ENCODE measurements at regions of chr3 and their contacts with region 1.

Region 1: DNA sequence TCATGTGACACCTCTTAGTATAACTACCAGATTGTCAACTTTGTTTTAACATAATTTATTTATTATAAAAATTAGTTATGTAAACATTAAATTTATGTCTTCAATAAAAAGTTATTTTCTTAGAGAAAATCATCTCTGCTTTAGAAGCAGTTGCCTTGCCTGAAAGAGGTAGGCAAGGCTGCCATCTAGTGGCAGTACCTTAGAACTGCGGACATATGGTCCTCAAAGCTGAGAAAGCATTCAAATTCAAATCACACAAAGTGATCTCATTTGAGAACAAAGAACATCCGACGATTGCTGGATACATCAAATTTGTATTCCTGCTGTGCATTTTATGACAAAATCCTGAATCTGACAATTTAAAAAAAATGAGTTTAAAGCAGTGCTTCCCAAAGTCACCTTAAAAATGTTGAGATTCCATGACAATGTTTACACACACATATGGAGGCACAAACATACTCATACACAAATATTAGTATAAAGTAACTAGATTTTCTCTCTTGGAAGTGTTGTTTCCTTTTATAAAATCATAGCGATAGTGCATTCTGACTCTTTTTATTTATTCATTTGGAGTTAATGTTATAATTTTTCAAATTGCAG is 617.4 kb downstream of the CADM2 start:
- DNase-seq: peak; percentile 31
- H3K4me3 ChIP-seq: no peak overlapping the region
- H3K27ac ChIP-seq: no peak overlapping the region
- H3K4me1 ChIP-seq: no peaks in the 10 kb centered on the region
- H3K27me3 ChIP-seq: no peaks in the 10 kb centered on the region
- CTCF ChIP-seq: peak; percentile 82 to 88

Region 2: GRCh38 chr3:84547971-84548970 is 1027.9 kb before region 1 on chr3:
- CTCF ChIA-PET with region 1: no interaction called
- dilution Hi-C with region 1: no loop called
- in situ Hi-C with region 1: no loop called
- intact Hi-C with region 1: loop called (anchors 1 kb)
- DNase-seq: peak; percentile 16
- H3K4me3 ChIP-seq: no peak overlapping the region
- H3K27ac ChIP-seq: no peak overlapping the region
- H3K4me1 ChIP-seq: no peaks in the 10 kb centered on the region
- H3K27me3 ChIP-seq: no peaks in the 10 kb centered on the region
- CTCF ChIP-seq: peak; percentile 44 to 58

Region 3: DNA sequence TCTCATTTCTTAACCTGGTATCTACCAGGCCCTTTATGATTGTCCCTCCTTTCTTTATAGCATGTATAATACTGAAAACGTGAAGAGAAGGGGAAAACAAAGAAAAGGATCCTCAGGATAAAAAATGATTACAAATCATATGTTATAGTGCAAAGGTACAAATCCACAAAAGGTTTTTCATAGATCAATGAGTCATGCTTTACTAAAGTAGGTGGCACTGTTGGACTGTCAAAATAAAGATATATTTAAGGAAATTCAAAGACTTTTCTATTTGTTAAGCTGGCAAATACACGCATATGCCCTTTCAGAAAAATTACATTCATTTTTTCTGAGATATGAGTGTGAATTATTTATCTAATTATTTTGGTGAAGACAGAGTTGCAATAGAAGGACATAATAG is 465.8 kb before region 1 on chr3:
- CTCF ChIA-PET with region 1: no interaction called
- dilution Hi-C with region 1: no loop called
- in situ Hi-C with region 1: no loop called
- intact Hi-C with region 1: loop called (anchors 1 kb)
- DNase-seq: no peak
- H3K4me3 ChIP-seq: no peak overlapping the region
- H3K27ac ChIP-seq: no peak overlapping the region
- H3K4me1 ChIP-seq: no peaks in the 10 kb centered on the region
- H3K27me3 ChIP-seq: no peaks in the 10 kb centered on the region
- CTCF ChIP-seq: peak in 1 of 2 donors; percentile 23

Region 4: GRCh38 chr3:85304359-85304964 is 271.7 kb before region 1 on chr3:
- CTCF ChIA-PET with region 1: no interaction called
- dilution Hi-C with region 1: no loop called
- in situ Hi-C with region 1: no loop called
- intact Hi-C with region 1: loop called (anchors 5 kb)
- DNase-seq: peak; percentile 1
- H3K4me3 ChIP-seq: no peak overlapping the region
- H3K27ac ChIP-seq: no peak overlapping the region
- H3K4me1 ChIP-seq: no peaks in the 10 kb centered on the region
- H3K27me3 ChIP-seq: peaks cover 3% of the 10 kb centered on the region
- CTCF ChIP-seq: peak; percentile 34 to 45

Region 5: DNA sequence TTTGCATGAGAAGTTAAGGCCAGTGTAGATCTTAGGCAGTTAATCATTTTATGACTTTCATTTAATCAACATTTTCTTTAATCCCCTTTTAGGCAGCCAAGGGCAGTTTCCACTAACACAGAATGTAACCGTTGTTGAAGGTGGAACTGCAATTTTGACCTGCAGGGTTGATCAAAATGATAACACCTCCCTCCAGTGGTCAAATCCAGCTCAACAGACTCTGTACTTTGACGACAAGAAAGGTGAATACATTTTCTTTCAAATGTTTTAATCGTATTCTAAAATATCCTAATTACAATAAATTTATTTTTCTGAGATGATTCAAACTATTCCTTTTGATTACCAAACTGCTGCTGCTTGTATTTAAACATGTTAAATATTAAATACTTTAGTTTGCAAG is 225.8 kb after region 1 on chr3:
- CTCF ChIA-PET with region 1: no interaction called
- dilution Hi-C with region 1: no loop called
- in situ Hi-C with region 1: no loop called
- intact Hi-C with region 1: loop called (anchors 2 kb)
- DNase-seq: peak; percentile 29
- H3K4me3 ChIP-seq: no peak overlapping the region
- H3K27ac ChIP-seq: no peak overlapping the region
- H3K4me1 ChIP-seq: no peaks in the 10 kb centered on the region
- H3K27me3 ChIP-seq: no peaks in the 10 kb centered on the region
- CTCF ChIP-seq: peak; percentile 56 to 75